ENCODE measurements at regions of chr19 and their contacts with region 1.

Region 1: DNA sequence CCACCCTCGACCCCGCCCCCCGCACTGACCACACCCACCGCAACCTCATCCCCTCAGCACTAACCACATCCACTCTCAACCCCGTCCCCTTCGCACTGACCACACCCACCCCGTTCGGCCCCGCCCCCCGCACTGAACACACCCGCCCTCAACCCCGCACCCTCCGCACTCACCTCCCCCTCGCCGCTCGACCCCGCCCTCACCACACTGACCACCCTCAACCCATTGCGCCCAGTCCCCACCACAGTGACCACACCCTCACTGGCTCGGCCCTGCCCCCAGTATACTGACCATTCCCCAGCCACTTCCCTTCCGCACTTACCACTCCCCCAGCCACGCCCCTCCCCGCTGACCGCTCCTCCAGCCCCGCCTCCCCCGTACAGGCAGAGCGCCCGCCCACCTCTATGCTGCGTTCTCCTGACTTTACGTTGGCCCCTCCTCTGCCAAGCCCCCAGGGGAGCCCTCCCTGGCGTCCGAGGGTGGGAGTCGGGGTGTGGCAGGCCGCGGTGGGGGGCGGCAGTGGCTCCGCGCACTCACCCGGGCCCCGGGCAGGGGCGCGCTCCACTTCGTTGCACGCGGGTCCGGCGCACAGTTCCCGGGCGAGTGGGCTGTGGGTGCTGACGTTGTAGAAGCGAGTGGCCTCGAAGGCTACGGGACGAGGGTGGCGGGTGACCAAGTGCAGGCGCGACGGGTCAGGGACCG is 8.5 kb downstream of the F2RL3 start:
- DNase-seq: peak; percentile 60
- ATAC-seq: peak; percentile 85
- H3K4me3 ChIP-seq: peak overlapping the region; percentile 90
- H3K27ac ChIP-seq: peak overlapping the region; percentile 7; the same call in 1 of the 2 replicates
- H3K4me1 ChIP-seq: peaks cover 44% of the 10 kb centered on the region
- H3K27me3 ChIP-seq: no peaks in the 10 kb centered on the region
- CTCF ChIP-seq: no peak
- EP300 ChIP-seq: no peak
- POLR2A ChIP-seq: peak; percentile 28; the same call in 1 of the 2 replicates
- RAD21 ChIP-seq: no peak

Region 2: GRCh38 chr19:16197188-16197621 is 700.1 kb before region 1 on chr19:
- CTCF ChIA-PET with region 1: no interaction called
- POLR2A ChIA-PET with region 1: no interaction called
- RAD21 ChIA-PET with region 1: no interaction called
- SMC1A ChIA-PET with region 1: no interaction called
- in situ Hi-C with region 1: no loop called
- intact Hi-C with region 1: no loop called
- DNase-seq: no peak
- ATAC-seq: no peak
- H3K4me3 ChIP-seq: peak overlapping the region; percentile 84
- H3K27ac ChIP-seq: peak overlapping the region; percentile 83
- H3K4me1 ChIP-seq: peaks cover 7% of the 10 kb centered on the region
- H3K27me3 ChIP-seq: no peaks in the 10 kb centered on the region
- CTCF ChIP-seq: no peak
- EP300 ChIP-seq: no peak
- POLR2A ChIP-seq: no peak
- RAD21 ChIP-seq: no peak

Region 3: GRCh38 chr19:16771618-16772017 is 125.7 kb before region 1 on chr19:
- CTCF ChIA-PET with region 1: interaction called, 9 read pairs
- POLR2A ChIA-PET with region 1: no interaction called
- RAD21 ChIA-PET with region 1: no interaction called
- SMC1A ChIA-PET with region 1: no interaction called
- in situ Hi-C with region 1: loop called (anchors 5 kb)
- intact Hi-C with region 1: loop called (anchors 2 kb)
- DNase-seq: peak; percentile 16
- ATAC-seq: peak; percentile 85
- H3K4me3 ChIP-seq: no peak overlapping the region
- H3K27ac ChIP-seq: no peak overlapping the region
- H3K4me1 ChIP-seq: no peaks in the 10 kb centered on the region
- H3K27me3 ChIP-seq: no peaks in the 10 kb centered on the region
- CTCF ChIP-seq: peak; percentile 73 to 78 (median 75)
- EP300 ChIP-seq: no peak
- POLR2A ChIP-seq: no peak
- RAD21 ChIP-seq: peak; percentile 76

Region 4: GRCh38 chr19:16836115-16837034 is 60.9 kb before region 1 on chr19:
- CTCF ChIA-PET with region 1: interaction called, 8 read pairs
- POLR2A ChIA-PET with region 1: no interaction called
- RAD21 ChIA-PET with region 1: interaction called, 6 read pairs
- SMC1A ChIA-PET with region 1: interaction called, 9 read pairs
- in situ Hi-C with region 1: no loop called
- intact Hi-C with region 1: loop called (anchors 2 kb)
- DNase-seq: peak; percentile 46
- ATAC-seq: peak; percentile 95
- H3K4me3 ChIP-seq: no peak overlapping the region
- H3K27ac ChIP-seq: peak overlapping the region; percentile 49
- H3K4me1 ChIP-seq: peaks cover 27% of the 10 kb centered on the region
- H3K27me3 ChIP-seq: no peaks in the 10 kb centered on the region
- CTCF ChIP-seq: peak; percentile 51 to 85 (median 61)
- EP300 ChIP-seq: no peak; a peak in 1 of 4 replicates
- POLR2A ChIP-seq: peak; percentile 49
- RAD21 ChIP-seq: peak; percentile 69